Heart right ventricle (tissue), 16 donors: ENCODE measurements at regions of chr17 and their contacts with region 1.

Region 1: GRCh38 chr17:16380640-16381495 is at the start of gene UBB:
- DNase-seq: peak; percentile 97
- ATAC-seq: peak; percentile 98 to 100 (median 99)
- H3K4me3 ChIP-seq: peak within 1 kb of the TSS; percentile 42 to 82 (median 69)
- H3K27ac ChIP-seq: peak within 1 kb of the TSS; percentile 83 to 97 (median 92)
- H3K4me1 ChIP-seq: peaks cover 0 to 45% (median 29%) of the 10 kb centered on the region in 9 donors
- H3K27me3 ChIP-seq: no peaks in the 10 kb centered on the region
- CTCF ChIP-seq: peak in 3 of 9 donors; percentile 26 to 28 (median 27)
- total RNA-seq, gene UBB: 1,254 to 2,151 (median 1,968) TPM

Region 2: DNA sequence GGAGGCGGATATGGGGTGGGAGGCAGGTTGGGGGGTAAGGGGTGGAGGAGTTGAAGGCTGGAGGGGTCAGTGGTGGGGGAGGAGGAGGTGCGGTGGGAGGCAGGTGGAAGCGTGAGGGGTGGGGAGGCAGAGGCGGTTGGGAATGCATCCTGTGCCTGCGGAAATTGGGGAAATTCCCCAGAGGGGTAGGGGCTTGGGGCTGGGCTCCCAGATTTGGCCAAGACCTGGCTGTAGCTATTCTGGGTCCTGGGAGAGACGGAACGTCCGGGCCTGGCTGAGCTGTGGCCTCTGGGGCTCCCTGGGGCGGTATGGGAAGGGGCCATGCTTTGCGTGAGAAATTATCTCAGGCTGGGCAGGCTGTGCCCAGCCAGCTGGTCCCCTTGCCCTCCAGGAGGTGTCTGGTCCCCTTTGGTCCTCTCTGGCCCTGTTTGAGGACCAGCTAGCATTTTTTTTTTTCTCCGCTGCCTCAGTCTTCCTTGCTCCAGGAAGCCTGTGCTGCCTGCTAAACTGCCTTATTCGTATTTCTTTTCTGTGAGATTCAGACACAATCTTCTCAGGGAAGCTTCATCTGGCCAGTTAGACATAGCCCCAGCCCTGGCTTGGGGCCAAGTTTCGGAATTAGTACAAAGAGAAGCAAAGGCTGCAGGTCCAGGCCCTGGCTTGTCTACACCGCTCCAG is 27.2 kb after region 1 on chr17:
- intact Hi-C with region 1: loop called in 1 of 10 experiments (anchors 1 kb)
- DNase-seq: peak; percentile 52 to 73
- ATAC-seq: peak; percentile 54 to 78 (median 64)
- H3K4me3 ChIP-seq: peak overlapping the region in 6 of 10 donors; percentile 10 to 68 (median 48)
- H3K27ac ChIP-seq: peak overlapping the region; percentile 64 to 87 (median 83)
- H3K4me1 ChIP-seq: peaks cover 2 to 23% (median 16%) of the 10 kb centered on the region in 9 donors
- H3K27me3 ChIP-seq: peaks cover 0 to 15% (median 0%) of the 10 kb centered on the region in 7 donors
- CTCF ChIP-seq: no peak

Region 3: GRCh38 chr17:16415031-16415924 is 34.4 kb after region 1 on chr17 and contains the start of gene TRPV2:
- intact Hi-C with region 1: loop called in 2 of 10 experiments (anchors 2 to 5 kb)
- DNase-seq: peak in 1 of 2 donors; percentile 58
- ATAC-seq: peak; percentile 32 to 82 (median 68)
- H3K4me3 ChIP-seq: peak within 1 kb of the TSS; percentile 39 to 79 (median 66)
- H3K27ac ChIP-seq: peak within 1 kb of the TSS; percentile 78 to 97 (median 92)
- H3K4me1 ChIP-seq: peaks cover 0 to 49% (median 31%) of the 10 kb centered on the region in 9 donors
- H3K27me3 ChIP-seq: no peaks in the 10 kb centered on the region
- CTCF ChIP-seq: peak in 7 of 9 donors; percentile 24 to 49 (median 34)
- total RNA-seq, gene TRPV2: 4.6 to 25.4 (median 8.6) TPM

Region 4: GRCh38 chr17:16438557-16439302 is 57.9 kb after region 1 on chr17:
- intact Hi-C with region 1: loop called in 6 of 10 experiments (anchors 2 to 10 kb)
- DNase-seq: peak; percentile 91 to 97
- ATAC-seq: peak; percentile 92 to 98 (median 95)
- H3K4me3 ChIP-seq: peak overlapping the region; percentile 66 to 97 (median 88)
- H3K27ac ChIP-seq: peak overlapping the region; percentile 47 to 94 (median 86)
- H3K4me1 ChIP-seq: peaks cover 7 to 48% (median 35%) of the 10 kb centered on the region in 9 donors
- H3K27me3 ChIP-seq: no peaks in the 10 kb centered on the region
- CTCF ChIP-seq: no peak

Region 5: GRCh38 chr17:16521070-16521727 is 140.3 kb after region 1 on chr17:
- intact Hi-C with region 1: loop called in 3 of 10 experiments (anchors 5 kb)
- DNase-seq: peak; percentile 32 to 84
- ATAC-seq: peak; percentile 87 to 95 (median 92)
- H3K4me3 ChIP-seq: no peak overlapping the region
- H3K27ac ChIP-seq: no peak overlapping the region
- H3K4me1 ChIP-seq: peaks cover 0 to 18% (median 10%) of the 10 kb centered on the region in 9 donors
- H3K27me3 ChIP-seq: peaks cover 0 to 4% (median 0%) of the 10 kb centered on the region in 7 donors
- CTCF ChIP-seq: peak; percentile 83 to 95 (median 93)